Natural killer cell (primary cell): ENCODE measurements at regions of chr16 and their contacts with region 1.

Region 1: GRCh38 chr16:68512183-68512582 is 26.9 kb upstream of the ZFP90 start:
- DNase-seq: no peak
- ATAC-seq: no peak
- H3K4me3 ChIP-seq: no peak overlapping the region
- H3K4me3 Mint-ChIP-seq: no peak overlapping the region
- H3K27ac ChIP-seq: no peak overlapping the region
- H3K27ac Mint-ChIP-seq: no peak overlapping the region
- H3K4me1 ChIP-seq: peaks cover 8% of the 10 kb centered on the region
- H3K4me1 Mint-ChIP-seq: peaks cover 0 to 4% of the 10 kb centered on the region in 2 donors
- H3K27me3 ChIP-seq: no peaks in the 10 kb centered on the region
- H3K27me3 Mint-ChIP-seq: peaks cover 5 to 10% of the 10 kb centered on the region in 2 donors
- CTCF ChIP-seq: no peak

Region 2: GRCh38 chr16:68367030-68367429 is 145.2 kb before region 1 on chr16:
- intact Hi-C with region 1: loop called (anchors 5 kb)
- DNase-seq: peak in 1 of 2 donors; percentile 70
- ATAC-seq: peak in 2 of 3 donors; percentile 30 to 35
- H3K4me3 ChIP-seq: no peak overlapping the region
- H3K4me3 Mint-ChIP-seq: no peak overlapping the region
- H3K27ac ChIP-seq: no peak overlapping the region
- H3K27ac Mint-ChIP-seq: no peak overlapping the region
- H3K4me1 ChIP-seq: peaks cover 67% of the 10 kb centered on the region
- H3K4me1 Mint-ChIP-seq: peaks cover 33 to 54% of the 10 kb centered on the region in 2 donors
- H3K27me3 ChIP-seq: peaks cover 3% of the 10 kb centered on the region
- H3K27me3 Mint-ChIP-seq: peaks cover 0 to 7% of the 10 kb centered on the region in 2 donors
- CTCF ChIP-seq: peak; percentile 54

Region 3: GRCh38 chr16:68396481-68396880 is 115.7 kb before region 1 on chr16:
- intact Hi-C with region 1: loop called (anchors 1 kb)
- DNase-seq: peak in 1 of 2 donors; percentile 80
- ATAC-seq: peak in 2 of 3 donors; percentile 36 to 55
- H3K4me3 ChIP-seq: no peak overlapping the region
- H3K4me3 Mint-ChIP-seq: no peak overlapping the region
- H3K27ac ChIP-seq: no peak overlapping the region
- H3K27ac Mint-ChIP-seq: no peak overlapping the region
- H3K4me1 ChIP-seq: no peaks in the 10 kb centered on the region
- H3K4me1 Mint-ChIP-seq: peaks cover 0 to 6% of the 10 kb centered on the region in 2 donors
- H3K27me3 ChIP-seq: no peaks in the 10 kb centered on the region
- H3K27me3 Mint-ChIP-seq: peaks cover 0 to 2% of the 10 kb centered on the region in 2 donors
- CTCF ChIP-seq: peak; percentile 37